HCT116 (cell line): ENCODE measurements at regions of chr7 and their contacts with region 1.

Region 1: GRCh38 chr7:80428161-80429054 is 83.5 kb downstream of the GNAT3 start:
- DNase-seq: peak; percentile 54
- ATAC-seq: peak; percentile 90
- H3K4me3 ChIP-seq: no peak overlapping the region
- H3K27ac ChIP-seq: no peak overlapping the region
- H3K4me1 ChIP-seq: peaks cover 0 to 7% of the 10 kb centered on the region in 2 experiments; a peak in 1 of 4 replicates
- H3K27me3 ChIP-seq: no peaks in the 10 kb centered on the region
- CTCF ChIP-seq: peak; percentile 58 to 73 (median 68)
- POLR2A ChIP-seq: no peak
- RAD21 ChIP-seq: peak; percentile 90

Region 2: GRCh38 chr7:78634093-78634492 is 1794.3 kb before region 1 on chr7:
- CTCF ChIA-PET with region 1: no interaction called
- POLR2A ChIA-PET with region 1: no interaction called
- RAD21 ChIA-PET with region 1: no interaction called
- intact Hi-C with region 1: no loop called
- DNase-seq: no peak
- ATAC-seq: no peak
- H3K4me3 ChIP-seq: no peak overlapping the region
- H3K27ac ChIP-seq: no peak overlapping the region
- H3K4me1 ChIP-seq: no peaks in the 10 kb centered on the region
- H3K27me3 ChIP-seq: no peaks in the 10 kb centered on the region
- CTCF ChIP-seq: no peak
- POLR2A ChIP-seq: no peak
- RAD21 ChIP-seq: no peak

Region 3: DNA sequence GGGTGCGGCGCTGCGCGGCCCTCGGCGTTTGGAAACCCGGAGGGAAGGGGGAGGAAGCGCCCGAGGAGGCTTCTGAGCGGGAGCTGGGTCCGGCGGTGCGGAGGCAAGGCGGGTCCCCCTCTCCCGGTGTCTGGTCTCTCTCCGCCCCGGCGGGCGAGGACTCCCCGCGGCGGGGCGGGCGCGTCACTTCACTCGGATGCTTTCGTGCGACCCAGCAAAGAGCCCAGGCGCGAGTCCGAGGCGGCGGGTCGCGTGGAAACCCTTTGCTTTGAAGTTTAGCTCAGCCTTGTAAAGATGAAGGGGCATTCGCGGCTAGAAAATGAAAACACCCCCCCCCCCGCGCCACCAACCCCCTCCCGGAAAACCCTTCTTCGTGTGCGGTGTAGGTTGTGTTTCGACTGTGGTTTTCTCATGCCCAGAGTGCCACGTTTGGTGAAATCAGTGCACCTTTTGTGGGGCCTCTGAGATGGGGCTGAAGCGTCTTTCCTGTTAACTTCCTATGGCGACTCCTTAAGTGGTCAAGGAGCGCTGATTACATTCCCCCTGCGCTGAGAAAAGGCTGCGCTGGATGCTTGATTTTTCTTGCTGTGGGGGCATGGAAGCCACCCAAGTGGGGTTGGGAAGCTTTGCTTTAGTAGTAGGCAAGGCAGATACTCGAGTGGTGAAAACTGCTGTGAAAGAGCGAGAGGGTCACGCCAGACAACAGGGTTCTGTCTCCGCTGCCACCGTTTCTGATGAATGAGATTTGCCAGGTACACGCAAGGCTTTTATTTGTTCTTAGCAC is 292.9 kb before region 1 on chr7:
- CTCF ChIA-PET with region 1: no interaction called
- POLR2A ChIA-PET with region 1: no interaction called
- RAD21 ChIA-PET with region 1: no interaction called
- intact Hi-C with region 1: no loop called
- DNase-seq: no peak
- ATAC-seq: peak; percentile 17
- H3K4me3 ChIP-seq: peak overlapping the region; percentile 76 to 95
- H3K27ac ChIP-seq: peak overlapping the region; percentile 98
- H3K4me1 ChIP-seq: peaks cover 45 to 61% of the 10 kb centered on the region in 2 experiments
- H3K27me3 ChIP-seq: no peaks in the 10 kb centered on the region
- CTCF ChIP-seq: no peak
- POLR2A ChIP-seq: no peak
- RAD21 ChIP-seq: no peak

Region 4: DNA sequence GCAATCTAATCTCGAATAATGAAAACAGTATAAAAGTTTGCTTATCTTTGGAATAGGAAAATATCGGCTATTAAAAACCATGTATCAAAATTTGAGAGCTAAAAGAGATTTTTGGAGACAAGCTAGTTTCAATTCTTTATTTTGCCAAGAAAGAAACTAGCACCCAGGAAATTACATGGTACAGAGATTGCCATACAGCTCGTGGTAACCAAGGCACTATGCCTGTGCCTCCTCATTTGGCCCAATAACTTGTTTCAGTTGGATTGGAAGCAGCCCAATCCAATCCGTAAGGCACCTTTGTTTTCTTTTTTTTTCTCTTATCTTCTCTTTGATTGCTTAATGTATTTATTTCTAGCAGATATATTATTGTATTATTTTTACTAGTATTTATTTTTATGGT is 238.8 kb before region 1 on chr7:
- CTCF ChIA-PET with region 1: no interaction called
- POLR2A ChIA-PET with region 1: no interaction called
- RAD21 ChIA-PET with region 1: no interaction called
- intact Hi-C with region 1: no loop called
- DNase-seq: no peak
- ATAC-seq: no peak
- H3K4me3 ChIP-seq: no peak overlapping the region
- H3K27ac ChIP-seq: no peak overlapping the region
- H3K4me1 ChIP-seq: peaks cover 31 to 49% of the 10 kb centered on the region in 2 experiments
- H3K27me3 ChIP-seq: no peaks in the 10 kb centered on the region
- CTCF ChIP-seq: no peak
- POLR2A ChIP-seq: no peak
- RAD21 ChIP-seq: no peak

Region 5: GRCh38 chr7:80659120-80660055 is 231.0 kb after region 1 on chr7:
- CTCF ChIA-PET with region 1: interaction called, 16 read pairs
- POLR2A ChIA-PET with region 1: no interaction called
- RAD21 ChIA-PET with region 1: interaction called in 1 of 2 experiments, 3 read pairs
- intact Hi-C with region 1: loop called (anchors 1 kb)
- DNase-seq: peak; percentile 31
- ATAC-seq: peak; percentile 52; the same call in 1 of the 2 replicates
- H3K4me3 ChIP-seq: no peak overlapping the region
- H3K27ac ChIP-seq: no peak overlapping the region
- H3K4me1 ChIP-seq: peaks cover 0 to 7% of the 10 kb centered on the region in 2 experiments; a peak in 1 of 4 replicates
- H3K27me3 ChIP-seq: no peaks in the 10 kb centered on the region
- CTCF ChIP-seq: peak; percentile 48 to 77 (median 48); a peak in 5 of 6 replicates
- POLR2A ChIP-seq: no peak
- RAD21 ChIP-seq: peak; percentile 74

Region 6: GRCh38 chr7:80681272-80681885 is 253.0 kb after region 1 on chr7:
- CTCF ChIA-PET with region 1: interaction called, 7 read pairs
- POLR2A ChIA-PET with region 1: no interaction called
- RAD21 ChIA-PET with region 1: no interaction called
- intact Hi-C with region 1: loop called (anchors 1 kb)
- DNase-seq: peak; percentile 45
- ATAC-seq: peak; percentile 99
- H3K4me3 ChIP-seq: no peak overlapping the region
- H3K27ac ChIP-seq: no peak overlapping the region
- H3K4me1 ChIP-seq: peaks cover 2 to 17% of the 10 kb centered on the region in 2 experiments; a peak in 2 of 4 replicates
- H3K27me3 ChIP-seq: no peaks in the 10 kb centered on the region
- CTCF ChIP-seq: peak; percentile 32 to 69 (median 48); a peak in 5 of 6 replicates
- POLR2A ChIP-seq: no peak
- RAD21 ChIP-seq: peak; percentile 51; the same call in 1 of the 2 replicates

Region 7: DNA sequence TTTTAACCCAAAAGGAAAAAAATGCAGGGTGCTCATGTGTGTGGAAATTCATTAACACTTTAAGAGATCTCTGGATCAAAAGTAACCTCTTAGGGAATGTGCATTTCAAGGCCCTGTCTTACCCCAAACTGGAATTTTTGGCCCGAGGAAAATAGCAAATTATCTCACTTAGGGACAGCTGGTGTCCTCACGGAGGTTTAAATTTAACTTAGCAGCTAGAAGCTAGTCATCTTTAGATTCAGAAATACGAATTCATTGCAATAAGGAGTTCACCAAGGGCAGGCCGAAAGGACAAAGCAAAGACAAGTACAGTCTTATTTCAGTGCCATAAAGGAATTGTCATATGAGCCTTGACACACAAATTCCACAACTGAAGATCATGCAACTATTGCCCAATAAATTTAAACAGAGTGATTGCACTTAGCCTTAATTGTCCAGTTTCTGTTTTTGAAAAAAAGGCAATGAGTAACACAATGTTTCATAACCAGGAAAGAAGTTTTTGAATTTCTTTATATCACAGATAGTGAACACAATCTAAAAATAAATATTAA is 512.9 kb after region 1 on chr7:
- CTCF ChIA-PET with region 1: no interaction called
- POLR2A ChIA-PET with region 1: no interaction called
- RAD21 ChIA-PET with region 1: no interaction called
- intact Hi-C with region 1: no loop called
- DNase-seq: no peak
- ATAC-seq: no peak
- H3K4me3 ChIP-seq: no peak overlapping the region
- H3K27ac ChIP-seq: no peak overlapping the region
- H3K4me1 ChIP-seq: peaks cover 16 to 31% of the 10 kb centered on the region in 2 experiments
- H3K27me3 ChIP-seq: no peaks in the 10 kb centered on the region
- CTCF ChIP-seq: no peak
- POLR2A ChIP-seq: no peak
- RAD21 ChIP-seq: no peak

Region 8: GRCh38 chr7:81457852-81458522 is 1029.6 kb after region 1 on chr7:
- CTCF ChIA-PET with region 1: interaction called, 4 read pairs
- POLR2A ChIA-PET with region 1: no interaction called
- RAD21 ChIA-PET with region 1: no interaction called
- intact Hi-C with region 1: loop called (anchors 5 kb)
- DNase-seq: peak; percentile 13
- ATAC-seq: no peak
- H3K4me3 ChIP-seq: no peak overlapping the region
- H3K27ac ChIP-seq: no peak overlapping the region
- H3K4me1 ChIP-seq: no peaks in the 10 kb centered on the region
- H3K27me3 ChIP-seq: no peaks in the 10 kb centered on the region
- CTCF ChIP-seq: peak in 2 of 3 experiments; percentile 24 to 49; a peak in 4 of 6 replicates
- POLR2A ChIP-seq: no peak
- RAD21 ChIP-seq: peak; percentile 71

Region 9: DNA sequence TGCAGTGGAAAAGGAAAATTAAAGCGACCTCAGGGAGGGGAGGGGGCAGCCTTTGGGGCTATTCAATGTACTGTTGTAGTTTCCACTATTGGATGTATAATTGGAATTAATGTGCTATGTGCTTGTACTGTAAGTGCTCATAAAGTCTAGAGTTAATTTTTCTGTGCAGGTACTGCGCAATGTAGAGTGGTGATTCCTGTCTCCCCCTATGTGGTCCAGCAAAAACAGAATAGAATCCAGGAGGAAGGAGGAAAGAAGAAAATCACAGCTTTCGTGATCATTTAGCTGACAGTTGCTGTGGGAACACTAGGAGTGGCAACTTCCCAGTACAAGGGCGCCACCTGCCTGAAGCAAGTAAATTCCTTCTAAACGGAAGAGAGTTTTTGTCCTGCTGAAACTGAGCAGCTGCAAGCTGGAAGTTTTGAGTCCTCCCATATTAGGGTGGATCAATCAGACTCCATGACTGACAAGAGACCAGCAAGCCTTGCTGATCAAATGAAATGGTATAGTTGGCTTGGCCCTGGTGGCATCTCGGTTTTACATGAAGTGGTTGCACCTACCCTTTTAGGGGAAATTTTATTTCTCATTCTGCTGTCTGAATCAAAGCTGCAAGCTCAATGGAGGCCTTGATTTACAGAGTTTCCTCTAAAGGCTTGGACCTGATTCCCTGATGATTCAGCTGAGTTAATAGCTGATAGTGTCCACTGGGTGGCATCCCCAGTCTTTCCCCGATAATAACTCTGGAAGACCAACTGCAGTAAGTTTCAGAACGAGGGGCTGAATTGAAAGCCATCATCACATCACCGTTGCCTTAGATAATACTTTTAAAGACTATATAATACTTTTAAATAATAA is 1041.7 kb after region 1 on chr7:
- CTCF ChIA-PET with region 1: interaction called, 23 read pairs
- POLR2A ChIA-PET with region 1: no interaction called
- RAD21 ChIA-PET with region 1: interaction called in 1 of 2 experiments, 3 read pairs
- intact Hi-C with region 1: loop called (anchors 5 kb)
- DNase-seq: peak; percentile 73
- ATAC-seq: peak; percentile 96
- H3K4me3 ChIP-seq: no peak overlapping the region
- H3K27ac ChIP-seq: no peak overlapping the region
- H3K4me1 ChIP-seq: peaks cover 0 to 9% of the 10 kb centered on the region in 2 experiments; a peak in 1 of 4 replicates
- H3K27me3 ChIP-seq: no peaks in the 10 kb centered on the region
- CTCF ChIP-seq: peak; percentile 58 to 79 (median 66); a peak in 5 of 6 replicates
- POLR2A ChIP-seq: no peak
- RAD21 ChIP-seq: peak; percentile 86